ENCODE measurements at regions of chr20 and their contacts with region 1.

Region 1: DNA sequence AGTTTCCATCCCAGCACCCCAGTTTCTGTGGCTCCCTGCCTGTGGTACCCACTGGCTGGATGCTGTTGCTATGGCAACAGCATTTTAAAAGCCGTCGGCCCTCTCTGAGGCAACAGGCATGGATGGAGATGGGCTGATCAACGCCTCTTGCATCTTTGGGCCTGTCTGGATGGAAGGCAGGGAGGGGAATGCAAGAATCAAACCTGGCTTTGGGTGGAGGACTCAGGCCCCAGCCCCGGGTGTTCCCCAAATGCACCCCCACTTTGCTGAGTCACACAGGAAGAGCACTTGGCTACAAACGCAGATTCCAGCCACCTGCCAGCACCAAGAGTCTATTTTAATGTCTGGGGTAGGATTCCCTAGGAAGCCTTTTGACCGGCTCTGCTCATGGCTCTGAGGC is 45.7 kb upstream of the TGM2 start:
- H3K4me3 ChIP-seq: no peak overlapping the region
- H3K27ac ChIP-seq: no peak overlapping the region
- H3K4me1 ChIP-seq: no peaks in the 10 kb centered on the region
- CTCF ChIP-seq: no peak

Region 2: DNA sequence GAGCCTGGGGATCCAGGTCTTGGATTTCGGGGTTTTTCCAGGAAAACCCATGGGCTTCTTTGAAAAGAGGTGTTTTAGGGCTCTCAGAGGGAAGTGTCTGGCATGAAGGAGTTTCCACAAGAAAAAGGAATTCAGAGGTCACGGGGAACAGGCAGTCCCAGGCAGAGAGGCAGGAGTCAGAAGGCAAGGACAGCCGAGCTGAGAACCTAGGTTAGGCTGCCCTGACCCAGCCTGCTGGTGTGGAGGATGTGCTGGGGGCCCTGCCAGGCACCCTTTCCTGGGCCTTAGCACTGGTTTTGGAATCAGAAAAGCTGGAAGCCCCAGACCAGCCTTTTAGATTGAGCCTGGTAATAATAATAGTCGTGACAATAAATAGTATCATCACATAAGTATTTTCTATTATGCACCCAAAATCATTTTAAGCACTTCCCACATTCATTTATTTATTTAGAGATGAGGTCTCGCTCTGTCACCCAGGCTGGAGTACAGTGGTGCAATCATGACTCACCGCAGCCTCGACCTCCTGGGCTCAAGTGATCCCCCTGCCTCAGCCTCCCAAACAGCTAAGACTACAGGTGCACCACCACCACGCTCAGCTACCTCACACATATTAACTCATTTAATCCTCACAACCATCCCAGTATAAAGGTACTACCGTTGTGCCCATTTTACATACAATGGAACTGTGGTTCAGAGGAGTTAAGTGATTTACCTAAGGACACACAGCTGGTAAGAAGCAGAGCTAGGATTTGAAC is 65.6 kb before region 1 on chr20:
- CTCF ChIA-PET with region 1: interaction called, 3 read pairs
- POLR2A ChIA-PET with region 1: interaction called, 11 read pairs
- H3K4me3 ChIP-seq: no peak overlapping the region
- H3K27ac ChIP-seq: no peak overlapping the region
- H3K4me1 ChIP-seq: no peaks in the 10 kb centered on the region
- CTCF ChIP-seq: no peak